AG04449 (cell line): ENCODE measurements at regions of chr1 and their contacts with region 1.

Region 1: GRCh38 chr1:51768971-51769588 is 109.4 kb downstream of the NRDC start:
- DNase-seq: peak; percentile 16
- H3K4me3 ChIP-seq: no peak overlapping the region
- CTCF ChIP-seq: peak; percentile 62

Region 2: DNA sequence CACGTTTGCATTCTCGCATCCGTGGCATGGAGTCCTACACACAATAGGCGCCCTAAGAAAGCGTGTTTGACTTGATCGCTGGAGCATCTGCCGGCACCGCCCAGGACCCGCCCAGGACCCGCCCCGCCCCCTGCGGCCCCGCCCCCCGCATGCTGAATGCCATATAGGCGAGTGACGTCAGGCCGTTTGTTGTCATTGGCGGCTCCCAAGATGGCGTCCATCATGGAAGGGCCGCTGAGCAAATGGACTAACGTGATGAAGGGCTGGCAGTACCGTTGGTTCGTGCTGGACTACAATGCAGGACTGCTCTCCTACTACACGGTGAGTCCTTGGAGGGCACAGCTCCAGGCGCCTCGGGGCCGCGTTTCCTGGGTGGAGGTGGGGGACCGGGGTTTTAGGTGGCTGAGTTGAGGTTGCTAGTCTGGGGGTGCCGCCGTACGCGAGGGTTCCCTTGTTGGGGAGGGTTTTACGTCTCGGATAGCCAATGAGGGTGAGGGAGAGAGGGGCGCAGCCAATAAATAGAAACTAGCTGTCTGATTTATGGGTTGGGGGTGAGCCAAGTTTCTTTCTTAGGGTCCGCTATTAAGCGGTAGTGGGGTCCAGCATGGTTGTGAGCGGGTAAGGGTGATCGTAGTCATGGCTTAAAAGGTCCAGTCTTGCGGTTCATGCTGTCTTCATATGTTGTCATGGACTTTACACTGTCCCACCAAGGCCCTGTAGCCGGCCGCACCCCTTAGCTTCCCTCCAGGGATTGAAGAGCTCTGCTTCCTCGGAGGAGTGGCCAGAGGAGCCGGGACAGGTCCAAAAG is 152.0 kb before region 1 on chr1 and contains the start of gene OSBPL9:
- CTCF ChIA-PET with region 1: interaction called, 59 read pairs
- POLR2A ChIA-PET with region 1: no interaction called
- DNase-seq: no peak
- H3K4me3 ChIP-seq: peak within 1 kb of the TSS; percentile 98
- CTCF ChIP-seq: no peak

Region 3: DNA sequence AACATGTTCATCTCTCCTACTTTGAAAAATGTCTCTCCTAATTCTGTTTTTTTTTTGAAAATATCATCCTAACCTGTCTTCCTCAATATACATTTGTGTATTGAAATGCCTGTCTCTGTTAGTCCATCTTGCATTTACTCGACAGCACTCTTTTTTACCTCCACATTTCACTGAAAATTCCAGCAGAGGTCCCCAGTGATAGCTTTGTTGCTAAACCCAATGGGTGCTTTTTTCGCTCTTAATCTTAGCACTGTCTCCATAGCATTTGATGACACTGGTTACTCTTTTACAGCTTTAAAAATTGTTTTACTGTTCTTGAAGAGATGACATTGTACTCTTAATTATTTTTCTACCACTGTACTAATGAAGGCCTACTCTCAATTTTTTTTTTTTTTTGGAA is 141.4 kb before region 1 on chr1:
- CTCF ChIA-PET with region 1: interaction called, 106 read pairs
- POLR2A ChIA-PET with region 1: no interaction called
- DNase-seq: no peak
- H3K4me3 ChIP-seq: no peak overlapping the region
- CTCF ChIP-seq: peak; percentile 39

Region 4: GRCh38 chr1:51648180-51649109 is 120.6 kb before region 1 on chr1:
- CTCF ChIA-PET with region 1: interaction called, 23 read pairs
- POLR2A ChIA-PET with region 1: no interaction called
- DNase-seq: peak; percentile 71
- H3K4me3 ChIP-seq: no peak overlapping the region
- CTCF ChIP-seq: no peak

Region 5: DNA sequence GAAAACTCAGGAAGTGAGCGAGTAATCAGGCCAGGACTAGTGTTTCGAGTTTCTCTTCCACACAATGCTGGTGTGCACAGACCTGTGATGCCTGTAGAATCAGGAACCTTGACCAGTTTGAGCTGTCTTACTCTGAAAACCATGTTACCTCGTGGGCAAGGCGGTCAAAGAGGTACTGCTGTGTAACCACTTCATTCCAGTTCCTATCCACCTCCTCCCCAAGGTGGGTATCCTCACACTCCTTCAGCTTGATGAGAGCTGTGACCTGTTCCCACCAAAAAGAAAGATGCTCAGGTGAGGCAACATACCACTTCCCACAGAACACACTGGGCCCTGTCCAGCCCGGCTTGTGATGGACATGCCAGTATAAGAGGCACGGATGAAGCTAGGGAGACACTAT is 21.3 kb after region 1 on chr1:
- CTCF ChIA-PET with region 1: interaction called, 13 read pairs
- POLR2A ChIA-PET with region 1: no interaction called
- DNase-seq: no peak
- H3K4me3 ChIP-seq: no peak overlapping the region
- CTCF ChIP-seq: no peak

Region 6: GRCh38 chr1:51986718-51987117 is 217.6 kb after region 1 on chr1:
- CTCF ChIA-PET with region 1: no interaction called
- POLR2A ChIA-PET with region 1: no interaction called
- DNase-seq: no peak
- H3K4me3 ChIP-seq: no peak overlapping the region
- CTCF ChIP-seq: no peak

Region 7: GRCh38 chr1:52111492-52111891 is 342.4 kb after region 1 on chr1:
- CTCF ChIA-PET with region 1: no interaction called
- POLR2A ChIA-PET with region 1: no interaction called
- DNase-seq: no peak
- H3K4me3 ChIP-seq: no peak overlapping the region
- CTCF ChIP-seq: no peak